Activated CD4-positive, alpha-beta T cell treated with anti-CD3 and anti-CD28 coated beads, Interleukin-2, amount 10 ng/mL, durations not matched to agents 24 days and 14 days (primary cell): ENCODE measurements at regions of chr10 and their contacts with region 1.

Region 1: GRCh38 chr10:117167789-117168674 is 29.3 kb upstream of the KCNK18 start:
- DNase-seq: peak; percentile 89
- H3K4me3 Mint-ChIP-seq: no peak overlapping the region
- H3K27ac Mint-ChIP-seq: no peak overlapping the region
- H3K4me1 Mint-ChIP-seq: peaks cover 8% of the 10 kb centered on the region
- H3K27me3 Mint-ChIP-seq: peaks cover 80% of the 10 kb centered on the region

Region 2: GRCh38 chr10:116272440-116273283 is 895.4 kb before region 1 on chr10 and contains the start of gene GFRA1:
- intact Hi-C with region 1: loop called (anchors 10 kb)
- DNase-seq: no peak
- H3K4me3 Mint-ChIP-seq: peak within 1 kb of the TSS; percentile 39
- H3K27ac Mint-ChIP-seq: no peak within 1 kb of the TSS
- H3K4me1 Mint-ChIP-seq: peaks cover 3% of the 10 kb centered on the region
- H3K27me3 Mint-ChIP-seq: peaks cover 65% of the 10 kb centered on the region
- total RNA-seq, gene GFRA1: not detected in 2 replicates

Region 3: DNA sequence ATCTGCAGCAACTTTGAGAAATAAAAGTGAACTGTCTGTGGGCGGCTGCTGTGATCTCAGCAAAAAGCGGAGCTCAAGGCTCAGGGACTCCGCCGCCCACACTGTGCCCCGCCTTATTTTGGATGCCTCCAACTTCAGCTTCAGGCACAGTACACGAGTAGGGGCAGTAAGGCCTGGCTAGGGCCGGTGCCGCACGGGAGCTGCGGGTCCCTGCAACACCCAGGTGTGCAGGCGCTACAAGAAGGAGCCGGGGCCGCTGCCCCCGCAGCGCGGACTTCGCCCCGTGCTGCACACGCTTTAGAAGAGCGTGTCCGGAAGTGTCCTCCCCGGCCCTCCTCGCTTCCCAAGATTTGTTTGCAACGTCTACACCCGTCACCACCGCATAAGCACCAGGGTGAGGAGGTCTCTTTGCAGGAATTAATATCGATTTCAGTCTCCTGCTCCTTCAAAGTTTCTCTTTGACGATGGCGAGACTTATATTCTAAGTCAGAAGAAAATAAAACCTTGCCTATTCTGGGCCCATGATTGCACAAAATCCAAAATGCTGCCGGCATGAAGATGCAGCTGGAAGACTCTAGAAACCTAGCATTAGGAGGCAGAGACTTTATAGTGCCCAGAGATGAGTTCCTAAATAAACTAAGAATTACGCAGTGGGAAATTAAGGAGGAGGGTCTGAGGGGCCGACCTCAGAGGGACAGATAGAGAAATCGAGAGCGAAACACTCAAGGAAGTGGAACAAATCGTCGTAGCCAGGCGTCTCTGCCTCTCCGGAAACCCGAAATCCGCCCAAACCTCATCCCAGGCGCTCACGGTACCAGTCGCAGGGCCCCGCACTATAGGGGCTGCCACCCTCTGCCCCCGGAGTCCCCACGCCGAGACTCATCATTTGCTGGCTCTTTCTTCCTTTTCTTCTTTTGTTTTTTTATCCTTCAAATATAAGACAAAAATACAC is 36.4 kb before region 1 on chr10:
- intact Hi-C with region 1: loop called (anchors 2 kb)
- DNase-seq: no peak
- H3K4me3 Mint-ChIP-seq: peak overlapping the region; percentile 40
- H3K27ac Mint-ChIP-seq: peak overlapping the region; percentile 59
- H3K4me1 Mint-ChIP-seq: peaks cover 10% of the 10 kb centered on the region
- H3K27me3 Mint-ChIP-seq: peaks cover 68% of the 10 kb centered on the region

Region 4: GRCh38 chr10:117241541-117242462 is 73.8 kb after region 1 on chr10:
- intact Hi-C with region 1: no loop called
- DNase-seq: no peak
- H3K4me3 Mint-ChIP-seq: peak overlapping the region; percentile 30
- H3K27ac Mint-ChIP-seq: no peak overlapping the region
- H3K4me1 Mint-ChIP-seq: no peaks in the 10 kb centered on the region
- H3K27me3 Mint-ChIP-seq: peaks cover 39% of the 10 kb centered on the region

Region 5: DNA sequence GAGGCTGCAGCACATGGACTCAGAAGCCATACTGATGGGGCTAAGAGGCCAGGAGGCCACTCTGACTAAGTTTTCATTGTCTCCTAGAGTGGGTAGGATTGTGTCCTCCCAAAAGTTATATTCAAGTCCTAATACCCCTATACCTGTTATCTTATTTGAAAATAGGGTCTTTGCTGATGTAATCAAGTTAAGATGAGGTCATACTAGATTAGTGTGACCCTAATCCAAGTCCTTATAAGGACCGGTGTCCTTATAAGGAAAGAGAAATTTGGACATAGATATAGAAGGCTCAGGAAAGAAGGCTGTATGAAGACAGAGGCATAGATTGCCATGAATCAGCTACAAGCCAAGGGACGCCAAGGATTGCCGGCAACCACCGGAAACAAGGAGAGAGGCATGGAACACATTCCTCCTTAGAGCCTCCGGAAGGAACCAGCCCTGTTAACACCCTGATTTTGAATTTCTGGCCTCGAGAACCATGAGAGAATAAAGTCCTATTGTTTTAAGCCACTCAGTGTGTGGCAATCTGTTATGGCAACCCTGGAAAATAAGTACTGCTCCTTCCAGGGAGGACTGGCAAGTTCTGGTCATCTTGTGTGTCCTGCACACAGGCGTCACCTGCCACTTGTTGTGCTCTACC is 531.5 kb after region 1 on chr10:
- intact Hi-C with region 1: no loop called
- DNase-seq: no peak
- H3K4me3 Mint-ChIP-seq: no peak overlapping the region
- H3K27ac Mint-ChIP-seq: no peak overlapping the region
- H3K4me1 Mint-ChIP-seq: no peaks in the 10 kb centered on the region
- H3K27me3 Mint-ChIP-seq: peaks cover 4% of the 10 kb centered on the region